ENCODE measurements at regions of chr10 and their contacts with region 1.

Region 1: DNA sequence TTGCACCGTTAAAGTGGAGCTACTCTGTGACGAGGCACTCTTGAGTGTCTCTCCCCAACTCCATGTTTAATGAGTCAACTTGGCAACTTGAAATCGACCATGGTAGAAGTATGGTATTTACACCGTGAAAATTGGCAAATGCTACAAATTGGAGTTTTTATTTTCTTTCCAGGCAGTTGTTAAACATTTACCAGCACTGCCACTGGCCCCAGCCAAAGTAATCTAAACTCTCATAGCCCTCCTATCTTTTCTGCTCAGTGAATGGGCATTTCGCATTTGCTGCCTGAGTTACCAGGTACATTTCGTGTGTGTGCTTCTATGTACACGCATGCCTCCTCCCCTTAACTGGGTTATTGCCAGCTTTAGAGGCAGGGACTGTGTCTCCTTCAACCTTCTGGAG is 83.3 kb downstream of the NHLRC2 start:
- DNase-seq: no peak
- H3K4me3 Mint-ChIP-seq: no peak overlapping the region
- H3K27ac Mint-ChIP-seq: no peak overlapping the region
- H3K4me1 Mint-ChIP-seq: no peaks in the 10 kb centered on the region
- H3K27me3 Mint-ChIP-seq: peaks cover 16% of the 10 kb centered on the region

Region 2: GRCh38 chr10:113843972-113844485 is 93.7 kb before region 1 on chr10:
- CTCF ChIA-PET with region 1: no interaction called
- POLR2A ChIA-PET with region 1: interaction called, 12 read pairs
- DNase-seq: no peak
- H3K4me3 Mint-ChIP-seq: no peak overlapping the region
- H3K27ac Mint-ChIP-seq: no peak overlapping the region
- H3K4me1 Mint-ChIP-seq: peaks cover 19% of the 10 kb centered on the region
- H3K27me3 Mint-ChIP-seq: no peaks in the 10 kb centered on the region

Region 3: DNA sequence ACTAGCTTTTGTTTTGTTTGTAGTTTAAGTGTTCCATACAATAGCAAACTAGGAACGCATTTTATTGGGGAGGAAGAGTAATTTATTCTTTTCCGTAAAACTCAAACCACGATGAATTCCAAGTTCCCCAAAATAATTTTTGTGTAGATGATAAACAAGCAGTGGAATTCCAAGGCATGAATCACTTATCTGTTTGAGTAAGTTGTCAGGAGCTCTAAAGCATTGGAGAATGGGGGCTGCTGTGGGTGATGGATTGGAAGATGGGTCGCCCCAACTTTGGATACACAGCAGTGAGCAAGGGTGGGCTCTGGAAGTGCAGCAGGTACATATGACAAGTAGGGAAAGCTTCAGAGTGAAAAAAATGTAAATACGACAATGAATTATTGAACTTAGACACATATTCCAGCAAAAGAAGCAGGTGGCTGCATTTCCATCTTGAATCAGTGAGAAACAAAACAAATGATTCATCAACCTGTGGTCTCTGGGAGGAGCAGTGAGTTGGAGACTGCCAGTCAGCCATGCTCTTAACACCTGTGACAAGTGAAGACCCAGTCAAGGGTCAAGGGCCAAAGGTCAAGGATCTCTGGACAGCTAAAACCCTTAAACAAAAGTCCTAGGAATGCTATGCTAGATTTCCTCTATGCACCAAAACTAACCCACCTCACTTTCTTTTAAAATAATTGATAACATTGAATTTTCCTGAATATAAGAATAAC is 71.7 kb after region 1 on chr10:
- CTCF ChIA-PET with region 1: no interaction called
- POLR2A ChIA-PET with region 1: no interaction called
- DNase-seq: no peak
- H3K4me3 Mint-ChIP-seq: no peak overlapping the region
- H3K27ac Mint-ChIP-seq: no peak overlapping the region
- H3K4me1 Mint-ChIP-seq: no peaks in the 10 kb centered on the region
- H3K27me3 Mint-ChIP-seq: peaks cover 25% of the 10 kb centered on the region